Common myeloid progenitor, CD34-positive (primary cell): ENCODE measurements at regions of chr6 and their contacts with region 1.

Region 1: DNA sequence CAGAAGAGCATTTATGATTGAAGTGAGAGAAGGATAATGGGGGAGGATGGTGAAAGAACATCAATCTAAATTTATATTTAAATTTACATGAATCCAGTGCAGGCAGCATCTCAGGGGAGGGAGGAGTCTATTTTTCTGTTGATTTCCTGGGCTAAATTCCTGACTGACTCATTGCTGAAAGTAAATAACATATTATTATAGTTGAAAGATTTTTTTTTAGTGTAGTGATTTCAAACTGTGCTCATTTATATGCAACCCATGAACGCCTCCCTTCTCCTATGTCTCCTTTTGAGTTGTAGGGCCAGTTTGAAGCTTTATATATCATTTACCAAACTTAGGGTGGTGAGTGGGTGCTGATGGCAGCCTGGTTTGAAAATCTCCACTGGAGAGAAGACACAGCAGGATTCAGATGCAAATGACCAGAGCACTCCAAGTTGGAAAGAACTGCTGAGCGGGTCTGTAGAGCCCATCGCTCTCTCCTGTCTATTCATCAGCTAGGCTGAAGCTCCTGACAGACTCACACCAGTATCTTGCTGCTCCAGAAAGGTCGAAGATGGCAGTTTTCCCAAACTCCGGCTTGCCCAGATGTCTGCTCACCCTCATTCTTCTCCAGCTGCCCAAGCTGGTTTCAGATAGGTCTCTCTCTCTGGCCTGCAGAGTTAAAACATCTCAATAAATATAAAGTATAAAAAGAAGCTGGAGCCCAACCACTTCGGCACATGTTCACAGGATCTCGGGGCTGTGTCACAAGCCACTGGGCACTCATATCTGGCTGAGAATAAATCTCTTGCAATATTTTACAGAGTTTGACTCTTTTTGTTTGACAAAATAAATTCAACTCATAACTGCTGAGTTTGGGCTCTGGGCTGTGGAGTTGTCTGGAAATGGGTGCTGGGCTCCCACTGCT is 18.3 kb downstream of the BTN2A1 start:
- DNase-seq: no peak
- H3K4me3 ChIP-seq: no peak overlapping the region
- H3K27ac ChIP-seq: peak overlapping the region in 1 of 2 experiments; percentile 91
- H3K4me1 ChIP-seq: peaks cover 17 to 59% (median 38%) of the 10 kb centered on the region in 4 experiments
- H3K27me3 ChIP-seq: no peaks in the 10 kb centered on the region

Region 2: DNA sequence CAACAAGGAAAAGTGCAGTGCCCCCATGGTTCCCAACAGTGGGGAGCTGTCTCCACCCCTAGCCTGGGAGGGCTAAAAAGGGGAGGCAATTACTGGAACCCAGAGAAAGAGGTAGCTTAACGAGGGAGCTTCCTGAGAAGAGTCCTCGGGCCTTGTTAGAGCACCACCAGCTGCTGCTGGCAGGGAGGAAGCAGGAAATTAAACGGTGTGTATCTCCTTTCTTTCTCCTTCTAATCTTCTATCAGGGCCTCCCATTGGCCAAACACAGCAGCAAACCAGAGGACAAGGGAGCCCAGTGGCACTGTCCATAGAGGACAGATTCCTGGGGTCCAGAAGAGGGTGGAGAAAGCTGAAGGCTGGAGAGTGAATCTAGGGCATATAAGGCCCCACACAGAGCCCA is 100.8 kb before region 1 on chr6:
- CTCF ChIA-PET with region 1: no interaction called
- POLR2A ChIA-PET with region 1: no interaction called
- DNase-seq: no peak
- H3K4me3 ChIP-seq: no peak overlapping the region
- H3K27ac ChIP-seq: no peak overlapping the region
- H3K4me1 ChIP-seq: peaks cover 0 to 7% (median 0%) of the 10 kb centered on the region in 4 experiments
- H3K27me3 ChIP-seq: no peaks in the 10 kb centered on the region

Region 3: GRCh38 chr6:26493258-26493657 is 17.2 kb after region 1 on chr6:
- CTCF ChIA-PET with region 1: interaction called, 10 read pairs
- POLR2A ChIA-PET with region 1: no interaction called
- DNase-seq: peak; percentile 58 to 80 (median 76)
- H3K4me3 ChIP-seq: no peak overlapping the region
- H3K27ac ChIP-seq: no peak overlapping the region
- H3K4me1 ChIP-seq: peaks cover 0 to 10% (median 2%) of the 10 kb centered on the region in 4 experiments
- H3K27me3 ChIP-seq: no peaks in the 10 kb centered on the region